Activated CD4-positive, alpha-beta T cell treated with anti-CD3 and anti-CD28 coated beads, Interleukin-2, amount 10 ng/mL, durations not matched to agents 24 days and 14 days (primary cell): ENCODE measurements at regions of chr17 and their contacts with region 1.

Region 1: GRCh38 chr17:81484195-81484979 is 28.2 kb downstream of the ACTG1 start:
- DNase-seq: peak; percentile 97
- H3K4me3 Mint-ChIP-seq: peak overlapping the region; percentile 37
- H3K27ac Mint-ChIP-seq: no peak overlapping the region
- H3K4me1 Mint-ChIP-seq: peaks cover 14% of the 10 kb centered on the region
- H3K27me3 Mint-ChIP-seq: peaks cover 29% of the 10 kb centered on the region

Region 2: DNA sequence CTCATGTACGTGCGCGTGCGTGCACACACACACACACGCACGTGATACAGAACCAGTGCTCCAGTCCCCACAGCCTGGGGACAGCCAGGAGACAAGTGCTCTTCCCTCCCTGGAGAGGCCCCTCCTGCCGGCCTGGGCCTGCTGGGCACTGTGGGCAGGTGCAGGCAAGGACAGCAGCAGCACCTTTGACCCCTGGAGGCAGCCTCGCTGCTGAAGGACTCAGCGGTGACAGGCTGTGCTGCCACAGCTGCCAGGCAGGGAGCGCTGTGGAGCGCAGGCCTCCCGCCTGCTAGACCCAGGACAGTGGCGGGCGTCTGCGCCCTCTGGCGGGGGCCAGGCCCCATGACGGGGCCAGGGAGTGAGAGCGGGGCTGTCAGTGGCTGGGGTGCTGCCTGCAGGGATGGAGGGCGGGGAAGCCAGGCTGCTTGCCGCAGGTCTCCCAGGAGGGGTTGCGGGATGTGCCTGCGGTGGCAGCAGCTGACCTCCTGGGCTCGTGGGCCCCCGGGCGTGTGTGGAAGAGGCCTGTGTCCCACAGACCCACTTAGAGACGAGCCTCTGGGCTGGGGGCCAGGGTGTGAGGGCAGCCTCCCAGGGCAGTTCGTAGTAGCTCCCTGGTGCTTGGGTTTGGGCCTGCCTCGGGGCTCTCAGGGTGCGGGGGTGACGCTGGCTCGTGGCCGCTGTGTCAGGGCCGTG is 382.6 kb before region 1 on chr17:
- intact Hi-C with region 1: loop called (anchors 2 kb)
- DNase-seq: peak; percentile 97
- H3K4me3 Mint-ChIP-seq: no peak overlapping the region
- H3K27ac Mint-ChIP-seq: no peak overlapping the region
- H3K4me1 Mint-ChIP-seq: peaks cover 2% of the 10 kb centered on the region
- H3K27me3 Mint-ChIP-seq: no peaks in the 10 kb centered on the region

Region 3: DNA sequence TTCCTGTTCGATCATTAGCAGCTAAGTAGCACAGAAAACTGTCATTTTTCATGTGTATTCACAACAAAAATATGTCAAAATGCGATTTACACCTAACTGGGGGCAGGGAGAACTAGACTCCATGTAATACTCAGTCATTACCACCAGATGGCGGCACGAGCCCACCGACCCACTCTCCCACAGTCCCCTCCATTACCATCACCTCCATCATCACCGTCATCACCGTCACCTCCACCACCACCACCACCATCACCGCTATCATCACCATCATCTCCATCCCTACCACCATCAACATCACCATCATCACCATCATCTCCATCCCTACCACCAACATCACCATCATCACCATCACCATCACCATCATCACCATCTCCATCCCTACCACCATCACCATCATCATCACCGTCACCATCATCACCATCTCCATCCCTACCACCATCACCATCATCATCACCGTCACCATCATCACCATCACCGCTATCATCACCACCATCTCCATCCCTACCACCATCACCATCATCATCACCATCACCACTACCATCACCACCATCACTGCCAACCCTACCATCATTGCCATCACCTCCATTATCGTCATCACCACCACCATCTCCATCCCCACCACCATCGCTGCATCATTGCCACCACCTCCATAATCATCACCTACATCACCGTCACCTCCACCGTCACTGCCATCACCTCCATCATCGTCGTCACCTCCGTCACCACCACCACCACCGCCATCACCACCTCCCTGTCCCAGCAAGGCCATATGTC is 230.8 kb before region 1 on chr17:
- intact Hi-C with region 1: loop called (anchors 1 kb)
- DNase-seq: peak; percentile 86
- H3K4me3 Mint-ChIP-seq: no peak overlapping the region
- H3K27ac Mint-ChIP-seq: peak overlapping the region; percentile 3
- H3K4me1 Mint-ChIP-seq: peaks cover 10% of the 10 kb centered on the region
- H3K27me3 Mint-ChIP-seq: no peaks in the 10 kb centered on the region

Region 4: GRCh38 chr17:81277421-81277820 is 207.0 kb before region 1 on chr17:
- intact Hi-C with region 1: no loop called
- DNase-seq: no peak
- H3K4me3 Mint-ChIP-seq: no peak overlapping the region
- H3K27ac Mint-ChIP-seq: no peak overlapping the region
- H3K4me1 Mint-ChIP-seq: peaks cover 2% of the 10 kb centered on the region
- H3K27me3 Mint-ChIP-seq: no peaks in the 10 kb centered on the region

Region 5: DNA sequence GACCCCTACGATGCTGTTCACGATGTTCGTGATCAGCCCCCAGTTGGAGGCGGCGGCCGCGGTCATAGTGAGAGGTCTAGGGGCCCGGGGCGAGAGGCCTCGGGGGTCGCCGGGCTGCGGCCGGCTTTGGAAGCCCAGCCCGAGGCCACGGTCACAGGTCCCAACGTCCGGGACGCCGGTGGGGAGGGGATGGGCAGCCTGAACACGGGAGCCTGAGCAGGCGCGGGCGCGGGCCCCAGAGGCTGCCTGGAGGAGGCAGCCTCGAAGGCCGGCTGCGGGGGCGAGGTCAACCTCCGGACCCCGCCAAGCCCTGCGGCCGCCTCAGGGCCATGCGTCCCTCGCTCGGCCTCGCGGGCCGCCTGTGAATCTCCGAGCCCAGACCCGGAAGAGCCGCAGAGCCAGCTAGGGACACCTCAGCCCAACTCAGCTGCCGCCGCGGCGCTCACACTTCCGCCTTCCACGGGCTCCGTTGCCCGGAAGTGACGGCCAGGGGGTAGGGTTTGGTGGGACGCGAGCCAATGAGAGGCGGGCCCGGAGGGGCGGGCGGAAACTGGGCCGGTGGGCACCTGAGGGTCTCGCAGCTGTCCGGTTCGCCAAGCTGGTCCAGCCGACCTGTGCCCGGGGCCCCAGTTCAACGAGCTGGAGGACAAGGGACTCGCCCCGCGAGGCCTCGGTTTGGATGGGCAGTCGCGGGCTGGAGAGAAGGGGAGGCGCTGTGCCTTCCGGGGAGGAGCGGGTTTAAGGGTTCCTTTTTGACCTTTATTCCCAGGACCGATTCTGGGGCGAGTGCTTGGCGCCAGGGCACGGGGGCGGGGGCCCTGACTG is 189.3 kb before region 1 on chr17 and contains the start of gene SLC38A10:
- intact Hi-C with region 1: loop called (anchors 2 kb)
- DNase-seq: peak; percentile 99
- H3K4me3 Mint-ChIP-seq: peak within 1 kb of the TSS; percentile 98
- H3K27ac Mint-ChIP-seq: peak within 1 kb of the TSS; percentile 96
- H3K4me1 Mint-ChIP-seq: peaks cover 27% of the 10 kb centered on the region
- H3K27me3 Mint-ChIP-seq: no peaks in the 10 kb centered on the region
- total RNA-seq, gene SLC38A10: 98.0 and 105 TPM in 2 replicates

Region 6: DNA sequence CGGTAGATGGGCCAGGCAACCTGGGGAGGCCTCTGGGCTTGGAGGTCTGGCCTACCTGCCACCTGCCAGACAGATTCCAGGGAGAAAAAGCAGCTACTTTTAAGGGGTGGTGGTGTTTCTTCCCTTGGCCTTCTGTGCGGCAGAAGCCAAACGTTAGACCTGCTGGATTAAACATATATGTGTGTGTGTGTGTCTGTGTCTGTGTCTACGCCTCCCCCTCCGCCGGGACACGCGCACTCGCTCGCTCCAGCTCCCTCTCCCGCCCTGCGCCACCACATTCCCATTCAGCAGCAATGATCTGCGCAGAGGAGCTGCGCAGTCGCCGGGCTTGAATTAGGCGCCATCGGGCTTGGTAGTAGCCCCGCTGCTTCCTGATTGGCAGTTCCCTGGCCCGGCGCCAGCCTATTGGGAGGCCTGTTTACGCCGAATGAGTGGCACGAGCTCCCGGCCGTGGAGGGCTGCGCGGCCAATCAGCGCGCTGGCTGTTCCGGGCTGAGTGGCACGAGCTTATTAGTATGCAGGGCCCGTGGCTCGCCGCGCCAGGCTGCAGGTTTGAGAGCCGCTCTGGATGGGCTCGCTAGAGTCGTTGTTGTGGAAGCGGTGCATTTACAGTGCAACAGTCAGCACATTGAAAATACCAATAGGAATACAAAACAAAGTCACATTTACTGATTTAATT is 89.3 kb before region 1 on chr17 and contains the start of gene BAHCC1:
- intact Hi-C with region 1: loop called (anchors 5 kb)
- DNase-seq: peak; percentile 89
- H3K4me3 Mint-ChIP-seq: peak within 1 kb of the TSS; percentile 59
- H3K27ac Mint-ChIP-seq: peak within 1 kb of the TSS; percentile 78
- H3K4me1 Mint-ChIP-seq: peaks cover 16% of the 10 kb centered on the region
- H3K27me3 Mint-ChIP-seq: peaks cover 53% of the 10 kb centered on the region
- total RNA-seq, gene BAHCC1: 0.05 TPM in 1 of 2 replicates, not detected in the other

Region 7: GRCh38 chr17:81512560-81513371 is 28.4 kb after region 1 on chr17 and contains the start of gene ACTG1:
- intact Hi-C with region 1: loop called (anchors 2 kb)
- DNase-seq: peak; percentile 97
- H3K4me3 Mint-ChIP-seq: peak within 1 kb of the TSS; percentile 99
- H3K27ac Mint-ChIP-seq: peak within 1 kb of the TSS; percentile 93
- H3K4me1 Mint-ChIP-seq: peaks cover 34% of the 10 kb centered on the region
- H3K27me3 Mint-ChIP-seq: peaks cover 2% of the 10 kb centered on the region
- total RNA-seq, gene ACTG1: 3,353 and 3,420 TPM in 2 replicates

Region 8: DNA sequence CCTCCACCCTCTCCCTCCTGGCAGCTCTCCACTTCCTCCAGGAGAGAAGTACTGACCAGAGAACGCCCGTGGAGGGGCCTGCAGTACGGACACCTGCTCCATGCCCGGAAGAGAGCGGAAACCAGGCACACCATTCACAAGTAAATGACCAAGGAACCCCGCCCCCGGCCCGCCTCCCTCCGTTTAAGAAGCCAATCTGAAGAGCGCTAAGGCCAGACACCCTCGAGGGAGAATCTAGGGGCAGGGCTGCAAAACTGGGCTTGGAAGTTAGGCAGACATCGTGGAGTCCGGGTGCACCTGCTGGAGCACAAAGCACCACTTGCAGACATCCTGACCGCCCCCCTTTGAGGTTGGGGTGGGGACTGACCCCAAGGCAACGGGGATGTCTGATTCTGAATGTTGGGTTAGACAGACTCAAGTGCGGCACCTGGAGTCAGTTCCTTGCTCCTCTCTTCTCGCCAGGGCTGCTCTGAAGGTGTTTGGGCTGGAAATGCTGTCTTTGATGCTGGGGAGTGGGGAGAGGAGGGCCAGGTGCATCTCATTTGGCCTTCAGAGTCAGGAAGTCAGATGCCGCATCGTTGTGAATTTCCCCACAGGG is 68.7 kb after region 1 on chr17:
- intact Hi-C with region 1: loop called (anchors 2 kb)
- DNase-seq: peak; percentile 92
- H3K4me3 Mint-ChIP-seq: peak overlapping the region; percentile 91
- H3K27ac Mint-ChIP-seq: peak overlapping the region; percentile 94
- H3K4me1 Mint-ChIP-seq: peaks cover 24% of the 10 kb centered on the region
- H3K27me3 Mint-ChIP-seq: no peaks in the 10 kb centered on the region

Region 9: GRCh38 chr17:81621494-81622130 is 137.2 kb after region 1 on chr17:
- intact Hi-C with region 1: no loop called
- DNase-seq: no peak
- H3K4me3 Mint-ChIP-seq: no peak overlapping the region
- H3K27ac Mint-ChIP-seq: no peak overlapping the region
- H3K4me1 Mint-ChIP-seq: peaks cover 8% of the 10 kb centered on the region
- H3K27me3 Mint-ChIP-seq: no peaks in the 10 kb centered on the region

Region 10: DNA sequence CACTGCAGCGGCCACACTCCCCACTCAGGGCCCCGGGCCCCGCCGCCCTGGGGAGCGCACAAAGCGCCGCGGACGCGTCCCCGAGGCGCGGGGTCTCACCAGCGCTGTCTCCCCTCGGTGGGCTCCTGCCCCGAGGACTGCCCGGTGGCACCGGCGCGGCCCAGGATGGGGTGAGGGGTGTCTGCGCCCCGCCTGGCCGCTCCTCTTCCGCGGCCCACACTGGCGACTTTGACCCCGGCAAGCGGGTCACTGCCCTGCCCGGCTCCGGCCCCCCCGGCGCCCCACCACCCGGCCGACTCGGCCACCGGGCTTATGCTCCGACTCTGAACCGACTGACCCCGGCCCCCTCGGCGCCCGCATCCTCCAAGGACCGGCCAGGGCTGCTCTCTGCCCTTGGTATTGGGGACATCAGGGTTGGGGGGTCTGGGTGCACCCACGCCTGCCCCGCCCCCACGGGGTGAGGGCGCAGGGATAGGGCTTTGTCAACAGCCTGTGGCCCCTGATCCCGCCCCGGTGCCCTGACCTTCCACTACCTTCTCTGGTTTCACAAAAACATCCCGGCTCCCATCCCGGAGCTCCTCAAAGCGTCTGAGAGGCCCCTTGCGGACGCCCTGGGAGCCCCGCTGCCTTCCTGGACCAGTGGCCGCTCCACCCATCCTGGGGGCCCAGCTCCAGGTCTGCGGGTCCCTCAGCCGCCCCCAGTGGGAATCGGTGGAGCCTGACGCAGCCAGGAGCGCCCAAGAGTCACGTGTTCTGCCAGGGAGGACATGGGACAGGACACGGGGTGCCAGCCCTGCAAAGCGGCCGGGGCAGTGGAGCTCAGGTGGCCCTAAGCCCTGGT is 320.4 kb after region 1 on chr17:
- intact Hi-C with region 1: no loop called
- DNase-seq: no peak
- H3K4me3 Mint-ChIP-seq: no peak overlapping the region
- H3K27ac Mint-ChIP-seq: no peak overlapping the region
- H3K4me1 Mint-ChIP-seq: no peaks in the 10 kb centered on the region
- H3K27me3 Mint-ChIP-seq: peaks cover 37% of the 10 kb centered on the region